ENCODE measurements at regions of chr15 and their contacts with region 1.

Region 1: DNA sequence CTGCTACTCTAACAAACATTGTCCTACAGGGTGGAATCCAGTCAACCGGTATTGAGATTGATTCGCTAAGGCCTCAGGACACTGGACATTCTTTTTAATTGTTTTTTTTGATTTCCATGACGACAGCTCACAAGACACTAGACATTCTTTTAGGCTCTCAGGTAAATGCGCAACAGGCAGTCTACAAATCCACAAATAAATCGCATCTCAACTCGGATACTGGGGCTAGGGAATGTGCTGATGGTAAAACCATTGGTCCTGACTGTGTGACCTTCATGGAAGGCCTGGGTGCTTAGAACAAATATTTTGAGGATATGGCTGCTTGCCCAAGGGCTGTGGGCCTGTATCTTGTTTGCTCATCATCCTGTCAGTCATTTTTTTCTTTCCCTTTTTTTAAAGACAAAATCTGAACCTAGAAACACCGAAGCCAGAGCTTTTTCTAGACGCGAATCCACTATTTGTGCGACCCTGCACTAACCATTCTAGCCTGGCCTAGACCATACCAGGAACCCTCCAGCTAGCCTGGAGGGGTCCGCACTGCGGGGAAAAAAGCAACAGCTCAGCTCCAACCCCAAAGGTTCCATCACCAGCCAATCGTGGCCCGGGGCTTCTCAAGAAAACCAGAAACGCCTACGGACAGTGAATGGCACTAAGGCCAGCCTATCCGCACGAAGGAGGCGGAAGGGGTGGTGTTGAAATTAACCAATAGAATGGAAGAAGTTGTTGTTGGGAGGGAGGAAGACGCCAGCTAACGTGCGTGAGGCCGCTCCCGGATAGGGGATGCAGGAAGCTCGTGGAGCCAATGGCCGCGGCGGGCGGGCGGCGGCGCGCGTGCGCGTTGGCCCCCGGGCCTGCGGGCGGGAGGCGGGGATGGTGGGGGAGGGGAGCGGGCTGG is 18.1 kb upstream of the CHD2 start:
- DNase-seq: peak; percentile 96 to 100 (median 99)

Region 2: DNA sequence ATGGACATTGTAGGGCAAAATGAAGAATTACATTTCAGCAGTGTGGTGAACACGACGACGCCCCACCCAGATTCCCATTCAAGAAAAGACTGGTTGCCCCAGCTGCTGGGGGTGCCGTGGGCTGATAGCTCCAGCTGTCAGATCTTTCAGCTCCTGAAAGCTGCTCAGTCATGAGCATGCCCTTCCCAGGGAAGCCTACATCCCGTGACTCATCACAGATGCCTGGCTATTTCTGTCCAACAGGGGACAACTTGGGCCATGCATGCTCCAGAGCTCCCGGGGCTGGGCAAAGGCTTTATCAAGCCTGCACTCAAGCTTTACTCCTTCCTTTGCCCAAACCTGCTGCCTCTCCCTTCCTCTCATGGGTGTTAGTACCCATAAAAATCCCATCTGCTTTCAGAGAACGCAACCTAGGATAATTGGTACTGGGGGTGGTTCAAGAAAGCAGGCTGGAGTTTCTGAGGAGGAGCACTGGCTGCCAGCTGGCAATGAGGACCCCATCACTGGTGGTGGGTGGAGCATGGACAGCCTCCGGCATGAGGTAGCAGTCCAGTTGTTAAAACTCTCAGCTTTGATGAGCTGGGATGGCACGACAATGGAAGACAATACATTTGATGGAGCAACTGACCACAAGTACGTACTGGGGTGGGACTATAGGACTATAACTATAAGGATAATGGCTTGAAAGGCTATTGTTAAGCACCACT is 504.8 kb before region 1 on chr15:
- intact Hi-C with region 1: no loop called
- DNase-seq: no peak

Region 3: GRCh38 chr15:92747047-92747446 is 135.0 kb before region 1 on chr15:
- intact Hi-C with region 1: no loop called
- DNase-seq: no peak

Region 4: DNA sequence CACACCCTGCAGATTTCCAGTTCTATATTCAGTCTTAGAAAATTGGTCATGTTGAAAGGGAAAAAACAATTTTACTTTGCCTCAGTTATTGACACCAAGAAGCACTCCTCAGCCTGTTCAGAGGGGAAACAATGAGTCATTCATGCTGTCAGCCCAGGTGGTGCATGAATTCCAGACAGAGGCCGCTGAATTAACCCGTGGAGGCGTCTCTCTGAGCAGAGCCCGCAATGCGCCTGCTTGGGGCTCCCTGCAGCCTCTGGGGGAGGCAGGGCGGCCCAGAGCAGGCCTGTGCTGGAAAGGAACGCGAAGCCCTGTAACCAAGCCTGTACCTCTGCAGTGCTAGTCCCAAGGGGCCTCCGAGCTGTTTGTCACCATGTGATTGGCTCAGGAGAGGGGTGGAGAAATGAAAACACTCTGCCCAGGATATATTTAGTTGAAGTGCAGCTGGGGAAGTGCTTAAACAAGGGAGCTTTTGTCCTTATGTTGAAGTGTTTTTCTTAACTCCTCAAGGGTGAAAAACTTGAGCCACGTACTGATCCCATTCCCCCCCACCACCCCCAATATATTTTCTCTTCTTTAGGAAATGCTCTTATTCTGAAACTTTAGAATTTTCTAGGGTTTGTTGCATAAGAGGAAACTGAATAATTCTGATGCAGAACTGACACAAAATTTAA is 50.3 kb before region 1 on chr15:
- intact Hi-C with region 1: loop called (anchors 5 kb)
- DNase-seq: peak; percentile 74 to 96 (median 91)

Region 5: GRCh38 chr15:92903941-92904831 is 22.1 kb after region 1 on chr15:
- intact Hi-C with region 1: loop called (anchors 2 kb)
- DNase-seq: peak; percentile 97 to 100 (median 99)

Region 6: DNA sequence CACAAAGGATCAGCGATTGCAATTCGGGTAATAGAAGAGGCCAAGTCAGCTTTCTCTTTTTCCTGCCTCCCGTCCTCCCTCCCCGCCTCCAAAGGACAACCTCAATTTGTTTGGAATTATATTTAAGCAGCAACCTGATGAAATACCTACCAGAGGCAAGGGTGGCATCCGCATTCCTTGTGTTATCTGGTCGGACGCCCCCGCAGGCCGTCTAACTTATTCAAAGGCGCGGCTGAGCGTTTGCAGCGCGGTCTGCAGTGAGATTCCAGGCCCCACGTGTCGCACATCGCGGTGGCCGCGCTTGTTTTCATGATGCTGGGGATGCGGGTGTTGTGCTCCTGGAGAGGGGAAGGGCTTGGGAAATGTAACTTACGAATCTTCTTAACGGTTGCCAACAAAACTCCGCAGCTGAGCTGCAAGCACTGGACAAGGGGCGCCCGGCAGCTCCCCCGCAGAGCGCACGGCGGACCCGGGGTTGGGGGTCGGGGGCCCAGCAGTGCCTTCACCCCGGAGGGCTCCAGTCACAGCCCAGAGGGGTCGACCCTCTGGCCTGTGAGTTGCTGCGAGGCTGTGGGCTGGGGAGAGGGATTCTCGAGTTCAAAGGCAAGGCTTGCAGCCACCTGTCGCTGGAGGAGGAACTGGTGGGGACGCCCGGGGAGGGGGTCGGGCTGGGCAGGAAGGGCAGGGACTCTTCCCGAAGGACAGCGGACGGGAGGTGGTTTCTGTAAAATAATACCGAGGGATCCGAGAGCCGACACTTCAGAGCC is 227.5 kb after region 1 on chr15:
- intact Hi-C with region 1: no loop called
- DNase-seq: no peak

Measured in head of caudate nucleus (tissue), 42 donors.